ENCODE measurements at regions of chr20 and their contacts with region 1.

Region 1: DNA sequence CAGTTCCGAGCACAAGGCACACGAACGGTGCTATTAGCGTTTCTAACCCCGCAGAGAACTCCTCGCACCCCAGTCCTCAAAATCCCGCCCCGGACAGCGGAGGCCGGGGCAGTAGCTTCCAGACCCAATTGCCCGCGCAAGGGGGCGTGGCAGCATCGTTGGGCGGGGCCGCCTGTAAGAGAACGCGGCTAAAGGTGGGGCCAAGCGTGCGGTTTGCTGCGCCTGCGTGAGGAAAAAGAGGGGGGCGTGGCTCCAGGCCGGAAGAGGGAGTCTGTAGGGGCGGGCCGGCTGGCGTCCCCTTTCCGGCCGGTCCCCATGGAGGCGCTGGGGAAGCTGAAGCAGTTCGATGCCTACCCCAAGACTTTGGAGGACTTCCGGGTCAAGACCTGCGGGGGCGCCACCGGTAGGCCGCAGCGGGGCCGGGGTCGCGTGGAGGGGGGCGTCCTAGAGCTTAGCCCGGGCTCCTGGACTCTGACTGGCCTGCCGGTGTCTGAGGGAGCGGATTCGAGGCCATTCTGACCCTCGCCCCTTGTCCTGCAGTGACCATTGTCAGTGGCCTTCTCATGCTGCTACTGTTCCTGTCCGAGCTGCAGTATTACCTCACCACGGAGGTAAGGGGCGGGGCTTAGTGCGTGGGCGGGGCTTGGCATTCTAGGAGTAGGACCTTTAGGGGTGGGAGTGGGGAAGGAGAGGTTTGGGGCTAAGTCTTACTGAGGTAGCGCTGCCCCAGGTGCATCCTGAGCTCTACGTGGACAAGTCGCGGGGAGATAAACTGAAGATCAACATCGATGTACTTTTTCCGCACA is at the start of gene ERGIC3:
- DNase-seq: peak; percentile 93 to 96 (median 93)
- H3K4me3 ChIP-seq: peak within 1 kb of the TSS; percentile 70 to 93 (median 89)
- H3K4me3 Mint-ChIP-seq: peak within 1 kb of the TSS; percentile 88 to 93
- H3K27ac ChIP-seq: peak within 1 kb of the TSS; percentile 40 to 90
- H3K27ac Mint-ChIP-seq: peak within 1 kb of the TSS; percentile 57 to 94 (median 90)
- H3K4me1 ChIP-seq: peaks cover 13 to 19% of the 10 kb centered on the region in 2 donors
- H3K4me1 Mint-ChIP-seq: peaks cover 15% of the 10 kb centered on the region
- H3K27me3 ChIP-seq: no peaks in the 10 kb centered on the region
- H3K27me3 Mint-ChIP-seq: peaks cover 0 to 1% (median 0%) of the 10 kb centered on the region in 3 donors
- CTCF ChIP-seq: no peak
- polyA plus RNA-seq, gene ERGIC3: 128 to 371 (median 130) TPM

Region 2: DNA sequence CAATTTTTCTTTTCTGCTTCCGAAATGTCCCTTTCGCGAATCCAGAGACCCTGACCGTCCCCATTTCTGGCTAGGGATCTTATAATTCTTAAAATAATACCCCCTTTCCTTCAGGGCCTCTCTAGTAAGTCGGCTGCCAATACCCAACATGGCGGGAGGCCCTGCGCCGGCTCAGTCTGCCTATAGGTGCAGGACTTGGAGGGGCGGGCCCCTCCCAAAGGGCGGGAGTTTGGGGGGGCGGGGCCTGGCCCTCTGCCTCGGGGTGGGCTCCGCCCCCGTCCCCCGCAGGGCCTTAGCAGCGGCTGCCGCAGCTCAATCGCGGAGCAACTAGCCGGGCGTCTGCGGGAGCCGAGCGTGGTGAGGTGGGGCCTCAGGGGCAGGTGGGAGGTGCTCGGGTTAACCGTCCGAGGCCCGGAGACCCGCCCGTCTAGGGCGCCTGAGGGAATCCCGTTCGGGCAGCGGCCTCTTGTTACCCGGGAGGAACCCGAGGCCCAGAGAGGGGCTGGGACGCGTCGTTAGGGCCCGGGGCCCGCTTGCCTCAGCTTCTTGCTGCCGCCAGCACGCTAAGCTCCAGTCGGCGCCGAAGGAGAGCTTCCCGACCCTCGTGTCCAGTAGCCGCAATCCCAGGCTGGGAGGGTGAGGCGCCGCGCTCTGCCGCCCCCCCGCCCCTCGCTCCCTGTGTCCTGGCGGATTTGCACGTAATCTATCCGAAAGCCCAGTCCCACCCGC is 86.9 kb before region 1 on chr20 and contains the start of gene CEP250:
- intact Hi-C with region 1: loop called in 1 of 2 experiments (anchors 2 kb)
- DNase-seq: peak; percentile 82 to 90 (median 86)
- H3K4me3 ChIP-seq: peak within 1 kb of the TSS; percentile 81 to 97 (median 85)
- H3K4me3 Mint-ChIP-seq: peak within 1 kb of the TSS; percentile 87 to 95
- H3K27ac ChIP-seq: peak within 1 kb of the TSS; percentile 63 to 94
- H3K27ac Mint-ChIP-seq: peak within 1 kb of the TSS; percentile 85 to 99 (median 98)
- H3K4me1 ChIP-seq: peaks cover 8 to 22% of the 10 kb centered on the region in 2 donors
- H3K4me1 Mint-ChIP-seq: peaks cover 17% of the 10 kb centered on the region
- H3K27me3 ChIP-seq: no peaks in the 10 kb centered on the region
- H3K27me3 Mint-ChIP-seq: no peaks in the 10 kb centered on the region
- CTCF ChIP-seq: no peak
- polyA plus RNA-seq, gene CEP250: 0.81 to 5.9 (median 1.2) TPM

Measured in CD14-positive monocyte (primary cell).